ENCODE measurements at regions of chr1 and their contacts with region 1.

Region 1: DNA sequence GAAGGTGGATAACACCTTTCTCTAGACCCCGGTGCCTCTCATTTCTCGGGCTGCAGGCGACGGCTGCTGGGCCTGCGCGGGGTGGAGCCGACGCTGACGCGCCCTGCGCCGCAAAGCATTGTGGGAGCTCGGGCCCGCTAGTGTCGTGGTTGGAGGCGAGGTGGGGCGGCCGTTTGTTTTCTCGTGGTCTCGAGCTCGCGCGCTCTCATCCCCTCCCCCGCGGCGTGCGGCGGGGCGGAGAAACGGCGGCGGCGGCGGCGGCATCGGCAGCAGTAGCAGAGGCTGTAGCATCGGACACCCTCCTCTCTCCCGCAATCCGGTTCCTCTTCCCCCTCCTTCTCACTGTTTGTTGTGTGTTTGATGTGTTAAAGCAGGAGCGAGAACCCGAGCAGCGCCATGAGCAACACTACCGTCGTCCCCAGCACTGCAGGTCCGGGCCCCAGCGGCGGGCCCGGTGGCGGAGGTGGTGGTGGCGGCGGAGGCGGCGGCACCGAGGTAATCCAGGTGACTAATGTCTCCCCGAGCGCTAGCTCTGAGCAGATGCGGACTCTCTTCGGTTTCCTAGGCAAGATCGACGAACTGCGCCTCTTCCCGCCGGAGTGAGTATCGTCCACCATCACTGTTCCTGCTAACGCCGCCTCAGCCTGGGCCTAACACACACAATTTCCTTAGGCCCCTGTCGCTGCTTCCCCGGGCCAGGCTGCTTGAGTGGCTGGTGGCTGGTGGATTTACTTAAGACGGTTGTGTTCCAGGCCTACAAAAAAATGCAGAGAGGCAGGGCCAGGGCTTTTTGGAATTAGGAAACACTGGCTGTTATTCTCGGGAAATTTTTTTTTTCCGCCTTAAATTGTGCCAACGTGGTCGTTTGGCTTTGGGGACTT is at the start of gene SRSF11:
- DNase-seq: peak; percentile 79
- ATAC-seq: peak; percentile 96
- H3K4me3 ChIP-seq: peak within 1 kb of the TSS; percentile 88
- H3K27ac ChIP-seq: peak within 1 kb of the TSS; percentile 94
- H3K4me1 ChIP-seq: no peaks in the 10 kb centered on the region; the same call in 1 of the 2 replicates
- H3K27me3 ChIP-seq: no peaks in the 10 kb centered on the region
- CTCF ChIP-seq: 0 out of 6 replicates have a peak, but pooled peaks of 1 of the 3 experiments have one; percentile 14
- EP300 ChIP-seq: no peak
- POLR2A ChIP-seq: peak; percentile 95
- RAD21 ChIP-seq: no peak
- polyA plus RNA-seq, gene SRSF11: 83.0 to 109 TPM

Region 2: GRCh38 chr1:70205434-70206118 is 15.9 kb before region 1 on chr1 and contains the start of gene LRRC40:
- CTCF ChIA-PET with region 1: interaction called, 14 read pairs
- POLR2A ChIA-PET with region 1: interaction called, 43 read pairs
- RAD21 ChIA-PET with region 1: interaction called, 9 read pairs
- SMC1A ChIA-PET with region 1: interaction called, 31 read pairs
- in situ Hi-C with region 1: no loop called
- intact Hi-C with region 1: loop called (anchors 1 kb)
- DNase-seq: peak; percentile 84
- ATAC-seq: peak; percentile 83
- H3K4me3 ChIP-seq: peak within 1 kb of the TSS; percentile 83
- H3K27ac ChIP-seq: peak within 1 kb of the TSS; percentile 74
- H3K4me1 ChIP-seq: peaks cover 11% of the 10 kb centered on the region
- H3K27me3 ChIP-seq: no peaks in the 10 kb centered on the region
- CTCF ChIP-seq: no peak
- EP300 ChIP-seq: no peak
- POLR2A ChIP-seq: peak; percentile 82
- RAD21 ChIP-seq: no peak
- polyA plus RNA-seq, gene LRRC40: 26.1 to 44.3 TPM

Region 3: DNA sequence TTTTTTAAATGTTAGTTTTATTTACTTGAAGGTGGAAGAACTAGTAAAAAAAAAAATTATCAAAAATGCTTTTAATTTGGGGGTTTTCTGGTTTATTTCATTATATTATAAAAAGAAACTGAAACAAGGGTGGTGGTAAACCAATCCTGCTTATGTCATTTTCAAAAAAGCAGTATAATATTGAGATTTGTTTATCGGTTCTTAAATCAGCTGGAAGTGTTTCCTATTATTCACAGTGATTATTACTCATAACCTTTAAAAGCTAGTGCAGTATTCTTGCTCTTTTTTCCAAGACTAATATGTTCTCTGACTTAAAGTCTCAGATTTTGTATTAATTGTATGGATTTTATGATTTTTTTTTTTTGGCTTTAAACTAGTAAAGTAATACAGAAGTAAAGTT is 10.7 kb before region 1 on chr1:
- CTCF ChIA-PET with region 1: interaction called, 14 read pairs
- POLR2A ChIA-PET with region 1: interaction called, 43 read pairs
- RAD21 ChIA-PET with region 1: interaction called, 9 read pairs
- SMC1A ChIA-PET with region 1: interaction called, 31 read pairs
- in situ Hi-C with region 1: no loop called
- intact Hi-C with region 1: no loop called
- DNase-seq: no peak
- ATAC-seq: 0 out of 3 replicates have a peak, but pooled peaks have one; percentile 17
- H3K4me3 ChIP-seq: no peak overlapping the region
- H3K27ac ChIP-seq: no peak overlapping the region; the same call in 1 of the 2 replicates
- H3K4me1 ChIP-seq: peaks cover 6% of the 10 kb centered on the region
- H3K27me3 ChIP-seq: no peaks in the 10 kb centered on the region
- CTCF ChIP-seq: no peak
- EP300 ChIP-seq: no peak
- POLR2A ChIP-seq: no peak
- RAD21 ChIP-seq: no peak

Region 4: DNA sequence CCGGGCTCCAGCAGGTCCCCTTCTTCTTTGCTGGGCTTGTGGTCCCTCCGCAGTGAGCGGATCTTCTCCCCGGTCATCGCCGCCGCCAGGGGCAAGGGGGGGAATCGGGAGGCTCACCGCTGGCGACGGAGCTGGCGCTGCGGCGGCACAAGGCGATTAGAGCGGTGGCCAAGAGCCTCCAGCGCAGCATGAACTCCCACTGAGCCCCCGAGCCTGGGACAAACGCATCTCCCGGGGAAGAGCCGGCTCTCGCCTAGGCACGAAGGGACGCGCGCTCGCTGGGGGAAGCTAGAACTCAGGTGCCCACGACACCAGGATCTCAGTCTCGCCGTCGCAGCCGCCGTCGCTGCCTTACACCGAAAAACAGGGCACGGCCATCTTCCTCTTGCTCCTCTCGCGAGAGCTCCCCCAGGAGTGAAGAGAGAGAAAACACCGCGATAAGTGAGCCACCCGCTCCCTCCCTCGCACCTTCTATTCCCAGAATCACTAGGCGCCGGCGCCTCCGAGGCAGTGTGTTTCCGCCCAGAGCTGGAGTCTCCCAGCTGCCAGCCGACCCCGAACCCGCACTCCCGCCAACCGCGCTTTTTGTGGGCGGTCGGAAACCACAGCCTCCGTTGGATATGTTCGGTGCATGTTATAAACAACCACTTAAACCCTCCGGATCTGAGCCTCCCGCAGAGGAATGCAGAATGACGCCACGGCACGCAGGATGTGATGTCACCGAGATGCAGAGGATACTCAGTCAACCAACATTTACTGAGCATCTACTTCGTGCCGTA is 133.0 kb after region 1 on chr1 and contains the start of gene ANKRD13C:
- CTCF ChIA-PET with region 1: no interaction called
- POLR2A ChIA-PET with region 1: interaction called, 5 read pairs
- RAD21 ChIA-PET with region 1: no interaction called
- SMC1A ChIA-PET with region 1: interaction called, 3 read pairs
- in situ Hi-C with region 1: no loop called
- intact Hi-C with region 1: loop called (anchors 5 kb)
- DNase-seq: peak; percentile 83
- ATAC-seq: peak; percentile 89
- H3K4me3 ChIP-seq: peak within 1 kb of the TSS; percentile 88
- H3K27ac ChIP-seq: peak within 1 kb of the TSS; percentile 90
- H3K4me1 ChIP-seq: peaks cover 12% of the 10 kb centered on the region; the same call in 1 of the 2 replicates
- H3K27me3 ChIP-seq: no peaks in the 10 kb centered on the region
- CTCF ChIP-seq: peak in 2 of 3 experiments; percentile 7 to 26; a peak in 1 of 6 replicates
- EP300 ChIP-seq: 0 out of 4 replicates have a peak, but pooled peaks of 1 of the 2 experiments have one; percentile 11
- POLR2A ChIP-seq: peak; percentile 97
- RAD21 ChIP-seq: no peak
- polyA plus RNA-seq, gene ANKRD13C: 3.7 to 5.1 TPM

Measured in GM12878 (cell line).